ENCODE measurements at regions of chr10 and their contacts with region 1.

Region 1: DNA sequence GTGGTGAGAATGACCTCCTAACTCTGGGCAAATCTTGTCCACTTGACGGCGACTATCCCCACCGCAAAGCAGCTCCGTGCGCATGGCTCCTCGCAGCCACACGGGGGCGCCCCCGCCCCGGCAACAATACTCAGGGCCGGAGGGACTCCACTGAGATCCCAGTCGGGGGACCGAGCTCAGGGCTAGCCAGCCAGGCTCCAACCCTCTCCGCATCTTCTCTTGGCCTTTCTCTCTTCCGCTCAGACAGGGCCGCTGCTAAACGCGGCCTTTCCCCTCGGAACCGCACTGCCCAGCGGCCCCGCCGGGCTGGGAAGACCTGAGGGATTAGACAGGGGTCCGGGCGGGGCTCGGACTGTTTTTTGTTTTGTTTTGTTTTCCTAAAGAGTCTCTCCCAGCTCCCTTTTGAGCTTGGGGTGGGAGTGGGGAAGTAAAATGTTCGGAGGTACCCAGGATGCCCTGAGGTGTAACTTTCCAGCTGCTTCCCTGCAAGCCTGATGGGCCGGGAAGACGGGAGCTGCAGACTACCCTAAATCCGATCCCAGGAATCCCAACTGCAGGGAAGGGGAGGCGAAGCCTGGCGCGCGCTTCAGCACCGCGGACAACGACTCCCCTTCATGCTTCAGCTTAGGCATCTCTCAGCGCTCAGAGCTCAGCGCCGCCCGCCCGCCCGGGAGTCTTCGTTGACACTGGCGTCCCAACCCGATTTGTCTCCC is 2.7 kb downstream of the KCNIP2 start:
- DNase-seq: peak; percentile 27
- H3K4me3 ChIP-seq: peak overlapping the region; percentile 29
- H3K27me3 ChIP-seq: no peaks in the 10 kb centered on the region
- CTCF ChIP-seq: peak; percentile 99

Region 2: DNA sequence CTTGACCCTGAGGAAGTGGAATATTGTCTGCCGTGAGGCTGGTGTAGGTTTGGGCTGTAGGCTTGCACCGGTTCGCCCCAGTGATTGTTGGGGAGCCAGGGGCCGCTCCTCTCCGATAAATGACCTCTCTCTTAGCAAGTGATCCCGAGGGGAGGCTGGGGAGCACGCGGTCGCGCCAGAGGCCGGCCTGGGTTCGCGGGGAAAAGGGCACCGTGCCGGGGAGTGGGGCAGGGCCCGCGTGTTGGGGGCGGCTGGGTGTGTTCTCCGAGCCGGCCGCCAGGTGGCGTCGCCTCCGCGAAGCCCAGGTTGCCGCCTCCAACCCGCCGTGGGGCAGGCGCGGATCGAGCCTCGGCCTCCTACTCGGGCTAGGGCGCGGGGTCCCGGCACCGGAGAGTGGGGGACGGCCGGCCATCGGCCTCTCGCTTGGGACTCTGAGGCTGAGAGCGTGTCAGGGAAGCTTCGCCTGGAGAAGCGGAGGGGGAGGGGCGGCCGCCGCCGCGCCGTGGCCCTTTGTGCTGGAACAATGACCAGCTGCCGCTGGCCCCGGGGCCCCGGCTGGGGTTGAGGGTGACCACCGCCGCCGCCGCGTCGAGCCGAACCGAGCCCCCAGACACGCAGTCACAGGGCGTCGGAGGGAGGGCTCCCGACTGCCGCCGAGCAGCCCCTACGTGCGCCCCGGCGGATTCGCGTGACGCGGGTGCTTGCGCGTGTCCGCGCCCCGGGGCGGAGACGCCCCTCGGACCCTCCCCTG is 841.7 kb before region 1 on chr10:
- CTCF ChIA-PET with region 1: no interaction called
- POLR2A ChIA-PET with region 1: no interaction called
- DNase-seq: no peak
- H3K4me3 ChIP-seq: peak overlapping the region; percentile 71
- H3K27me3 ChIP-seq: no peaks in the 10 kb centered on the region
- CTCF ChIP-seq: peak; percentile 67

Region 3: GRCh38 chr10:101858723-101859500 is 18.0 kb after region 1 on chr10:
- CTCF ChIA-PET with region 1: interaction called, 32 read pairs
- POLR2A ChIA-PET with region 1: no interaction called
- DNase-seq: no peak
- H3K4me3 ChIP-seq: no peak overlapping the region
- H3K27me3 ChIP-seq: no peaks in the 10 kb centered on the region
- CTCF ChIP-seq: no peak

Region 4: DNA sequence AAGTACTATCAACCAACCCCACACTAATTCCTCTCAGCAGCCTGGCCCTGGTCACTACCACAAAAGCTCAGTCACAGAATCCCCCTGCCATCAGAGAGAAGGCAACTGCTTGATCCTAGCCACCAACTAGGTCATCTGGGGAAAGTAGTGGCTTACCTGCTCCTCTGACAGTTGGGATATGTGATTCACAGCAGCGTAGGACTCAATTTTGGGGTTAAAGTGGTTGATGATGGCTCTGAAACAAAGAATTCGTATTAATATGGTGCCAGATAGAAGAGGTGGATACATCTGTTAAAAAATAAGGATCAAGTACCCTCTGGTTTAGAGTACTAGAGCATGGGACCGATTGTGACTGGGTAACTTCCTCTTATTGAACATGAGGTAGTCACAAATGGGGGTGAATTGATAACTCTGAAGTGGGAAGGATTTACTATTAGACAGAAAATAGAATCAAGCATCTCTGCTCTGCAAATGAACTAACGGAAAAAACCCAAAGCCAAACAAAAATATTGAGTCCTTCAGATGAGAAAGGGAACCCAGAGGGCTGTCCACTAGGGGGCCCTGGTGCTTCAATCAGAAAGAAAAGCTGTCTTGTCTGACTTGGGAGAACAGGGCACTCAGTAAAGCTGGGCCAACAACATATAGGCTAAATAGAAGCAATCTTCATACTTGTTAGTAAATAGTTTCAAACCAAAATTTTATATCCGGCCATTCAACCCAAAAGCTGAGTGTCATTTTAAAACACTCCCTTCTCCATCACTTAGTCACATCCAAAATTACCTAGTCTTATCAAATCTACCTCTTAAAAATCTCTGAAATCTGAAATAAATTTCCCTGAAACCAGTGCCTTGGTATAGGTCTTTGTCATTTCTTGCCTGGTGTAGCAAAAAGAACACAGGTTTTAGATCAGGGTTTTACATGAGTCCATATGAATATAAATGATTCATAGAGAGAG is 48.6 kb after region 1 on chr10:
- CTCF ChIA-PET with region 1: interaction called, 34 read pairs
- POLR2A ChIA-PET with region 1: no interaction called
- DNase-seq: no peak
- H3K4me3 ChIP-seq: no peak overlapping the region
- H3K27me3 ChIP-seq: no peaks in the 10 kb centered on the region
- CTCF ChIP-seq: peak; percentile 90

Region 5: GRCh38 chr10:102009801-102010425 is 169.0 kb after region 1 on chr10:
- CTCF ChIA-PET with region 1: interaction called, 129 read pairs
- POLR2A ChIA-PET with region 1: interaction called, 7 read pairs
- DNase-seq: peak; percentile 56
- H3K4me3 ChIP-seq: no peak overlapping the region
- H3K27me3 ChIP-seq: no peaks in the 10 kb centered on the region
- CTCF ChIP-seq: peak; percentile 97

Region 6: GRCh38 chr10:102064868-102065560 is 224.1 kb after region 1 on chr10 and contains the start of gene HPS6:
- CTCF ChIA-PET with region 1: interaction called, 10 read pairs
- POLR2A ChIA-PET with region 1: no interaction called
- DNase-seq: peak; percentile 74
- H3K4me3 ChIP-seq: peak within 1 kb of the TSS; percentile 76
- H3K27me3 ChIP-seq: no peaks in the 10 kb centered on the region
- CTCF ChIP-seq: peak; percentile 29
- polyA plus RNA-seq, gene HPS6: 8.3 and 11.8 TPM in 2 replicates

Region 7: DNA sequence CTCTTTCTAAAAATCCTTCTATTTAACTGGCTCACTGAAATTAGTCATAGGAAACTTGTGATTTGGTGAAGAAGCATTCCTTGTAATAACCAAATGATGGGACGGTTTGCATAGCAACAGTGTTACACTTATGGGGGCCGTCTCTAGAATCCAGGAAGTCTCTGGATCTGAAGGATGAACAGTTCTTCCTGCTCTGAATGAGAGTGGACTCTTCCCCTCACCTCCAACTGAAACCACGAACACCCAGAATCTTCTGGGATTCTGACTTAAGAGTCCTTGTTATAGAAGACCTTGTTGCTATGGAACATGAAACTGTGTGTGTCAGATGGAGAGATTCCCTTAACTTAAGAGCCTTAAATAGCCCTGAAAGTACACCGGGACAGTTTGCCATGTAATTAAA is 334.5 kb after region 1 on chr10:
- CTCF ChIA-PET with region 1: no interaction called
- POLR2A ChIA-PET with region 1: no interaction called
- DNase-seq: peak; percentile 41
- H3K4me3 ChIP-seq: no peak overlapping the region
- H3K27me3 ChIP-seq: no peaks in the 10 kb centered on the region
- CTCF ChIP-seq: no peak

Measured in BJ (cell line).